A673 (cell line): ENCODE measurements at regions of chr20 and their contacts with region 1.

Region 1: DNA sequence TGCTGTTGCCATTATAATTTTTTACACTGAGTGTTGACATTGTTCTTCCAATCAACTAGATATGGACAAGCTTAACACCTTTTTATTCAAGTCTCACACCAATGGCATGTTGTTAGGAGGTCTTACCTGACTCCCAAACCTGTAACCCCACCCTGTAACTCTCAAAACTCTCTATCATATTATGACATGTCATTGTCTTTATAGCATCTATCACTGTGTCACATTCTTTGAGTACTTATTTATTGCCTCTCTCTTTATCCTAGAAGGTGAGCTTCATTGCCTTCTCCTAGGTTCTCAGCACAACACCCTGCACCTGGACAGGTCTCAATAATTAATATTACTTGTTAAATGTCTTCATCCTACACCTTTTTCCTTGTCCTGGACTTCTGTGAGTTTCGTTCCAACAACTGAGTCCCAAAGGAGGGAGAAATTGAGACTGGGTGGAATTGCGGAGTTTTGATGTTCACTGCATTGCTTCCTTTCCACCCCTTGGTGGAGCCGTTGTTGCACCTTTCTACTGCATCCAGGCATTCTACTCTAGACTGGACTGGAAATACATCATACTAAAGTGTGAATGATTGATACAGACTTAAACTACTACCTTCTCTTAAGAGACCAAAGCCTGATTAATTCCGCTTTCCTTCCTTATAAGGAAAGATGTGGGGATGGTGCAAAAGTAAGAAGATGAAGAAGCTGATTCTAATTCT is 338.0 kb upstream of the CHD6 start:
- DNase-seq: peak; percentile 46
- H3K4me3 ChIP-seq: no peak overlapping the region
- H3K27ac ChIP-seq: no peak overlapping the region
- H3K4me1 ChIP-seq: no peaks in the 10 kb centered on the region
- H3K27me3 ChIP-seq: peaks cover 3% of the 10 kb centered on the region
- CTCF ChIP-seq: peak; percentile 69

Region 2: GRCh38 chr20:41818991-41819390 is 137.2 kb before region 1 on chr20:
- CTCF ChIA-PET with region 1: no interaction called
- POLR2A ChIA-PET with region 1: no interaction called
- intact Hi-C with region 1: no loop called
- DNase-seq: no peak
- H3K4me3 ChIP-seq: no peak overlapping the region
- H3K27ac ChIP-seq: no peak overlapping the region
- H3K4me1 ChIP-seq: no peaks in the 10 kb centered on the region
- H3K27me3 ChIP-seq: peaks cover 54% of the 10 kb centered on the region
- CTCF ChIP-seq: no peak

Region 3: GRCh38 chr20:42530822-42531448 is 574.8 kb after region 1 on chr20:
- CTCF ChIA-PET with region 1: no interaction called
- POLR2A ChIA-PET with region 1: no interaction called
- intact Hi-C with region 1: loop called (anchors 10 kb)
- DNase-seq: peak; percentile 46
- H3K4me3 ChIP-seq: no peak overlapping the region
- H3K27ac ChIP-seq: no peak overlapping the region
- H3K4me1 ChIP-seq: no peaks in the 10 kb centered on the region
- H3K27me3 ChIP-seq: peaks cover 11% of the 10 kb centered on the region
- CTCF ChIP-seq: peak; percentile 71

Region 4: GRCh38 chr20:43408848-43409576 is 1452.9 kb after region 1 on chr20:
- CTCF ChIA-PET with region 1: no interaction called
- POLR2A ChIA-PET with region 1: no interaction called
- intact Hi-C with region 1: loop called (anchors 2 kb)
- DNase-seq: peak; percentile 67
- H3K4me3 ChIP-seq: no peak overlapping the region
- H3K27ac ChIP-seq: no peak overlapping the region
- H3K4me1 ChIP-seq: no peaks in the 10 kb centered on the region
- H3K27me3 ChIP-seq: peaks cover 19% of the 10 kb centered on the region
- CTCF ChIP-seq: peak; percentile 83